ENCODE measurements at regions of chr12 and their contacts with region 1.

Region 1: GRCh38 chr12:7933255-7933729 is 2.7 kb downstream of the SLC2A3 start:
- DNase-seq: peak; percentile 28 to 95 (median 64)

Region 2: GRCh38 chr12:7716381-7716780 is 216.9 kb before region 1 on chr12:
- intact Hi-C with region 1: no loop called
- DNase-seq: no peak

Region 3: GRCh38 chr12:7959701-7960121 is 26.4 kb after region 1 on chr12:
- intact Hi-C with region 1: loop called (anchors 1 kb)
- DNase-seq: peak in 1 of 10 donors; percentile 20

Region 4: DNA sequence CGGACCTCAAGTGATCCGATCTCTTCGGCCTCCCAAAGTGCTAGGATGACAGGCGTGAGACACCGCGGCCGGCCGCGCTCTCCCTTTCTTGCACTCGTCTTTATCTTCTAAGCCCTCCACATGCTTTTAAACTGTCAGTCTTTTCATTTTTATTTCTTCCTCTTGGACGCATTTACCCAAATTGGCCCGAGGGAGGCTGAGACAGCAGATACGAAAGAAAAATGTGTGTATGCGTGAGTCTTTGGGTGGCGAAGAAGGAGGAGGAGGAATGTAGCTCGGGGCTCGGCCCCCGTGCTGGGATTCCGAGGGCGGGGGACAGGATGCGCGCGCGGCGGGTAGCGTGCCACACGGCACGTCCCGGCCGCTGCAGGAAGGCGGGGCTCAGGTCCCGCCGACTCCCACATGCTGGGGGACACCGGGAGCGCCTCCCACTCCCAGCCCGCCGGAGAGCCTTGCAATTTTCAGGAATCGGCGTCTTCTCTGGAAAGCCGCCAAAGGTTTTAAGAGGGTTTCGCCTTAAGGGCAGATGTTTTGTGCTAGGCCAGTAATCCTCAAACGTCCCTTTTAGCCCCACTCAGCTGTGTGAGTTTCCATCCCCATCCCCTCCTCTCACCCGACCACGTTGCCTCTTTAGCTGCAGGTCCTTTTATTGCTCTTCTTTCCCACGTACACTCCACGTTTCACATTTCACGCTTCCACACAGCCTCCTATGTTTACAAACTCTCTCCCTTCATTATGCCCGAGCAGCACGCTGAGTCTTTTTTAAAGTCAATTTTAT is 37.4 kb after region 1 on chr12:
- intact Hi-C with region 1: loop called (anchors 5 kb)
- DNase-seq: peak; percentile 51 to 97 (median 80)

Region 5: DNA sequence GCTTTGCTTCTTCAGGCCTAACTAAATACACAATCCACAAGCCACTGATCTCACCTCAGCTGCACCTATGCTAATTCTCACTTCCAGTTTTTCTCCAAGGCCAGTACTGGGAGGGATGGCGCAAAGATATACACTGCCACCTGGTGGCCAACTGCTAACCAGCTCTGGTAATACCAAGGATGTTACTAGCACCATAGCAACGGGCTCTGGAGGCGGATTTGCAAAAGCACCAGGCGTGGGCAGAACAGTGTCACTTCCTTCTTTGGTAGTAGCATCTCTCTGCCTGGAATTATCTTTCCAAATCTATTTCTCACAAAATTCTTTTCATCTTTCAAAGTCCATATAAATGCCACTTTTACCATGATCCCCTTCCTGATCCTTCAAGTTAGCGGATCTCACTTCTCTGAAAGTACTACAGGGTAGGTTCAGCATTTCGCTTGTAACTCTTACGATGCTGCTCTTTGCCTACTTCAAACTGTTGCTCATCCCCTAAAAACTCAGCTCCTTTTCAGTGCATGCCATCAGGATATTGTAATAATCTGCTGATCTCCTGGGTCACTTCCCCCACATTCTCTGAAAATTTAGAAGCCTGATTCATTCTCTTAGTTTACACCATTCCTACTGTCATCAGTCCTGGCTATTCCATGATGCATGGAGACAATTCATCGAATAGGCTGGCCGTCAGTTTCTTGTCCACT is 62.1 kb after region 1 on chr12:
- intact Hi-C with region 1: loop called (anchors 1 kb)
- DNase-seq: peak; percentile 64 to 97 (median 80)

Measured in posterior cingulate gyrus (tissue), 11 donors.